Sigmoid colon (tissue), 7 donors: ENCODE measurements at regions of chr13 and their contacts with region 1.

Region 1: GRCh38 chr13:44435142-44435982 is 61.7 kb downstream of the SERP2 start:
- DNase-seq: peak; percentile 99
- H3K4me3 ChIP-seq: peak overlapping the region; percentile 64 to 86 (median 74)
- H3K27ac ChIP-seq: peak overlapping the region; percentile 85 to 96 (median 92)
- H3K4me1 ChIP-seq: peaks cover 0 to 35% (median 18%) of the 10 kb centered on the region in 4 donors
- H3K27me3 ChIP-seq: no peaks in the 10 kb centered on the region
- CTCF ChIP-seq: no peak
- EP300 ChIP-seq: peak in 2 of 4 donors; percentile 64 to 66
- POLR2A ChIP-seq: peak; percentile 49 to 91

Region 2: GRCh38 chr13:43905435-43906031 is 529.8 kb before region 1 on chr13:
- intact Hi-C with region 1: loop called (anchors 1 kb)
- DNase-seq: no peak
- H3K4me3 ChIP-seq: no peak overlapping the region
- H3K27ac ChIP-seq: no peak overlapping the region
- H3K4me1 ChIP-seq: peaks cover 0 to 12% (median 5%) of the 10 kb centered on the region in 4 donors
- H3K27me3 ChIP-seq: no peaks in the 10 kb centered on the region
- CTCF ChIP-seq: peak; percentile 66 to 80 (median 76)
- EP300 ChIP-seq: no peak
- POLR2A ChIP-seq: no peak

Region 3: DNA sequence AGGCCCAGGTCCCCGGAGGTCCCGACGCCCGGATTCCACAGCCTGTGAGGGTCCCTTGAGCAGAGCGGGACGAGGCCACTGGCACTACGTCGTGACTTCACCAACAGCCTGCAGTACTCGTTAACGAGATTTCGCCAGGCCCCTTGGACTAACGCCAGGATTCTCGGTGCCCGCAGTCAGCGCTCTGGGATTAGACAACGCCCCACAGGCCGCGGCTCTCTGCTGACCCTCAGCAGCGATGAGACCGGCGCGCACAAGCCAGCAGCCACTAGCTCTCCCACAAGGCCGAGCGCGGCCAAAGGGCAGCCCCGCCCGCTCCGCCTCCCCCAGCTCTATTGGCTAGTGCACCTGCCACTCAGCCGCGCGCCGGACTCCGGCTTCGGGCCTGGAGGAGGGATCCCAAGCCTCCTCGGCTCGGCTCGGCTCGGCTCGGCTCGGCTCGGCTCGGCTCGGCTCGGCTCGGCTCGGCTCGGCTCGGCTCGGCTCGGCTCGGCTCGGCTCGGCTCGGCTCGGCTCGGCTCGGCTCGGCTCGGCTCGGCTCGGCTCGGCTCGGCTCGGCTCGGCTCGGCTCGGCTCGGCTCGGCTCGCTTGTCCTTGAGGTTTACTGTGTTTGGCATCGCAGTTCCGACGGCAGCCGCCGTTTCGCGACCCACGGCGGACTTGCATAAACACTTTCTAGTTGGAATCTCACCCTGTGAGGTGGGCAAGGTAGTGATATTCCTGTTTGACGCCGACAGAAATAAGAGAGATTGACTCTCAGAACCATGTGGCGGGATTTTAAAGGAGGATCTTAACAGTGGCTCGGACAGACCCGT is 293.4 kb before region 1 on chr13:
- intact Hi-C with region 1: loop called (anchors 5 kb)
- DNase-seq: peak; percentile 99
- H3K4me3 ChIP-seq: peak overlapping the region; percentile 43 to 57 (median 52)
- H3K27ac ChIP-seq: peak overlapping the region; percentile 86 to 95 (median 90)
- H3K4me1 ChIP-seq: peaks cover 0 to 17% (median 10%) of the 10 kb centered on the region in 4 donors
- H3K27me3 ChIP-seq: no peaks in the 10 kb centered on the region
- CTCF ChIP-seq: peak in 1 of 4 experiments; percentile 32
- EP300 ChIP-seq: no peak
- POLR2A ChIP-seq: peak; percentile 91 to 93

Region 4: DNA sequence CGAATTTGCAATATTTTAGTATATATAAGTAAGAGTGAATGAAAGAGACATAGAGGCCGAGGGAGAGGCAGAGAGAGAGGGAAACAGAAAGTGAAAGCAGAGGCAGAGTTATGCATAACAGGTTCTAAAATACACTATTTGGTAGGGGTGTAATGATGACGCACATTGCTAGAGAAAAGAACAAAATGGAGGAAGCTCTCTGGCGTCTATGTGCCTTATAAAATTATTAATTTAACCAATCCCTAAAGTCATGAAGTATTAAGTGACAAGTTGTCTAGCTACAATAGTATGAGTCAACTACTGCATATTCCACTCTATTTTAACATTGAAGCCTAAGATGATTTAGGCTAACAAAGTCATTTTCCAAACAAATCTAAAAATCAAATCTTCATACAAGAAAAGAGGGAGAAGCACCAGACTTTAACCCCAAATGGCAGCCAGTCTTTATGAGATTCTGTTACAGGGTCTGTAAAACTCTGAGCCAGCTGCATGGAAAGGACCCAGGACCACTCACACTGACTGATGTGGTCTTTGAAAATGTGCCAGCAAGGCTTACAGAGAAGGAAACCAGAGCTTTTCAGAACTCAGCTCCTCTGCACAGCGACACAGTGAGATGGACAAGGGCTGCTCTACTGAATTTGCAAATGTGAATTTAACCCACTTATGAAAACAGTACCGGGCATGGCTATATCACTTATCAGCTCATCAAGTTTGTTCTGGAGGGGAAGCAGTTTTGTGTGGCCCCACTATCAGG is 160.7 kb before region 1 on chr13:
- intact Hi-C with region 1: loop called (anchors 2 kb)
- DNase-seq: no peak
- H3K4me3 ChIP-seq: peak overlapping the region in 2 of 4 donors; percentile 12
- H3K27ac ChIP-seq: peak overlapping the region; percentile 81 to 87 (median 84)
- H3K4me1 ChIP-seq: peaks cover 0 to 80% (median 70%) of the 10 kb centered on the region in 4 donors
- H3K27me3 ChIP-seq: no peaks in the 10 kb centered on the region
- CTCF ChIP-seq: no peak
- EP300 ChIP-seq: peak; percentile 30 to 94 (median 88)
- POLR2A ChIP-seq: no peak

Region 5: GRCh38 chr13:44373601-44374348 is 61.6 kb before region 1 on chr13 and contains the start of gene SERP2:
- intact Hi-C with region 1: loop called (anchors 5 kb)
- DNase-seq: peak; percentile 76
- H3K4me3 ChIP-seq: peak within 1 kb of the TSS; percentile 41 to 74 (median 58)
- H3K27ac ChIP-seq: peak within 1 kb of the TSS; percentile 48 to 75 (median 64)
- H3K4me1 ChIP-seq: peaks cover 0 to 23% (median 14%) of the 10 kb centered on the region in 4 donors
- H3K27me3 ChIP-seq: no peaks in the 10 kb centered on the region
- CTCF ChIP-seq: no peak
- EP300 ChIP-seq: no peak
- POLR2A ChIP-seq: no peak
- total RNA-seq, gene SERP2: 6.9 to 9.6 (median 8.6) TPM

Region 6: GRCh38 chr13:44719857-44720671 is 284.7 kb after region 1 on chr13:
- intact Hi-C with region 1: no loop called
- DNase-seq: no peak
- H3K4me3 ChIP-seq: no peak overlapping the region
- H3K27ac ChIP-seq: peak overlapping the region in 3 of 4 donors; percentile 29 to 45 (median 35)
- H3K4me1 ChIP-seq: peaks cover 0 to 14% (median 7%) of the 10 kb centered on the region in 4 donors
- H3K27me3 ChIP-seq: no peaks in the 10 kb centered on the region
- CTCF ChIP-seq: no peak
- EP300 ChIP-seq: no peak
- POLR2A ChIP-seq: no peak